ENCODE measurements at regions of chr5 and their contacts with region 1.

Region 1: DNA sequence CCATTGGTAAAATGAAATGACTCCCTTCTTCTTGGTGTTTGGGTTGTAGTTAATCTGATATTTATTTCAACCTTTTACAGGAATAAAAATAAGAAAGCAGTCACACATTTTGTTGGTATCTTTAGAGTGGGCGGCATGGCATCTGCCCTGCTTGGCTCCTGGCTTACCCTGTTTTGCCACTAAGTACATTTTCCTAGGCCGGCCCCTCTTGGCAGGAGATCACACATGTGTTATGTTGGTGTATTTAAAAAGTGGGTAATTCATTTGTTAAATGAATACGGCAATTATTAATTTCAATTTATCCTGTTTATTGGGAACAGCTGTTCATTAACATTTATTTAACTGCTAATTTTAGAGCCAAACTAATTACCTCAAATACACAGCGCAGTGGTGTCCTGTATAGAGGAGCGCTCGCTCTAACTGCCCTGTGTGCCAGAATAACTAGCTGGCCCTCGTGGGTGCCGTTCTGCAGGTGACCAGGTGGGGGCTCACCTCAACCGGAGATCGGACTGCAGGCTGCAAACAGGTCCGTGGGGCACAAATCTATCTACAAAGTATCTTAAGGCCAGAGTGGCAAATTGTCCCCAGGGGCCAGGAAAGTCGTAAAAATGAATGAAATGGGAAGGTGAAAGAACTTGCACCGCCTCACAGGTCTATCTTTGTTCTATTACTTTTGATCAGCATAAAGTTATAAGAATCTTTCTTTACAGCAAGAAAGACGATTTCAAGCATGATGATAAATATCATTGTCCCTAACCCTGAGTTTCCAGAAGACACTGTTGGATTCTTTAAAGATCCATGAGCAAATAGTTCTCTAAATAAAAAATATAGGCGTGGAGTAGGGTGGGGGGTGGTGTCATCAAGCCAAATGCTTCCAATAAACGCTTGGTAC is 26.2 kb upstream of the GPR151 start:
- DNase-seq: peak; percentile 74
- ATAC-seq: peak; percentile 85

Region 2: DNA sequence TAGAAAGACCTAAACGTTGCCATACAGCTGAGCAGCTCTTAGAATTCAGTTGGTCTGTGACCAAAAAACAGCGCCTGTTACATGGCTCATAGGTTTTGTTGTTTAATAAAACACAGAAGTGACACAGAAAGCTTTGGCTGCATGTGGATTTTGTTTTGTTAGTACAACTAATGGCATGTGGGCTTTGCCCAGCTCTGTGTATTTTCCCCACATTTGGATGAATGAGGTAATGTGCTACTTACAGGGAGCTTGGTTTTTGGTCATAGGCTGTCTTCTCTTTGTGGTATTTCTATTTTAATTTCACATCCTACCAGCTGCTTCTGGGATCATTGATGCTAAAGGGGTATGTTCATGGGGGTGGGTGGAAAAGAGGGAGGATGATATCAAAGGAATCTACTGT is 240.6 kb before region 1 on chr5:
- intact Hi-C with region 1: no loop called
- DNase-seq: no peak
- ATAC-seq: no peak

Region 3: DNA sequence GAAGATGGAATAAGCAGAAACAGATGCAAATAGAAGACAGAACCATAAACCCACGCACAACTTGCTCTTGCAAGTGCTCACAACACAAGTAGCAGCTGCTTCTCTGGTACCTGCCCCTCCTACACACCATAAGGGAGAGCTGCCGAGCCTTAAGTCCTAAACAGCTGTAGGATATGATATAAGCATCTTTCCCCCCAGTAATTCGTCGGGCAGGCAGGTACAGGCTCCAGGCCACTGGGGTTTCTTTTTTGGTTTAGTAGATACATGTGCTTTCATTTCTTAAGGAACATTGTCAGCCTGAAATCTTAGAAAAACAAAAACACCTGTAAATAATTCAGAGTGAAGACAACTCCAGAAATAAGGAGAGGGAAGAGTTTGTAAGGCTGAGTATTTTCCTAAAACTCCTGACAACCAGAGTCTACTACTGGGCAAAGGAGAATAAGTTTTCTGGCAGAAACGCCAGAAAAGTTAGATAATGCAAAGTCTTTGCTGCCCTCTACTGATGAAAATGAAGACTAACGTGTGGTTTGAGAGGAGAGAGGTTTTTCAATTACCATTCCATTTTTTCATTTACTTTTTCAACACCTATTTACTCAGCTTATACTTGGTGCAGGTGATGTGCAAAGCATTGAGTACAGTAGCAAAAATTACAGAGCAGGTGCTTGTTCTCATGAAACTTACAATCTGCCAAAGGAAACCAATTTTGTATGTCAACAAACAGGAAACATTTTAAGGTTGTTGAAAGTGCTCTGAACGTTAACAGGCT is 115.2 kb before region 1 on chr5:
- intact Hi-C with region 1: no loop called
- DNase-seq: no peak
- ATAC-seq: peak; percentile 64

Region 4: GRCh38 chr5:146490089-146490843 is 51.9 kb before region 1 on chr5:
- intact Hi-C with region 1: no loop called
- DNase-seq: no peak
- ATAC-seq: no peak

Region 5: GRCh38 chr5:146965761-146966659 is 423.8 kb after region 1 on chr5:
- intact Hi-C with region 1: loop called (anchors 5 kb)
- DNase-seq: no peak
- ATAC-seq: peak; percentile 90

Region 6: GRCh38 chr5:147190331-147190730 is 648.1 kb after region 1 on chr5:
- intact Hi-C with region 1: loop called (anchors 10 kb)
- DNase-seq: no peak
- ATAC-seq: no peak

Measured in left ventricle myocardium superior (tissue), 1 donor.